AG04449 (cell line): ENCODE measurements at regions of chr19 and their contacts with region 1.

Region 1: GRCh38 chr19:14571695-14572490 is at the start of gene NDUFB7:
- DNase-seq: peak; percentile 72
- H3K4me3 ChIP-seq: peak within 1 kb of the TSS; percentile 99
- CTCF ChIP-seq: peak; percentile 93

Region 2: DNA sequence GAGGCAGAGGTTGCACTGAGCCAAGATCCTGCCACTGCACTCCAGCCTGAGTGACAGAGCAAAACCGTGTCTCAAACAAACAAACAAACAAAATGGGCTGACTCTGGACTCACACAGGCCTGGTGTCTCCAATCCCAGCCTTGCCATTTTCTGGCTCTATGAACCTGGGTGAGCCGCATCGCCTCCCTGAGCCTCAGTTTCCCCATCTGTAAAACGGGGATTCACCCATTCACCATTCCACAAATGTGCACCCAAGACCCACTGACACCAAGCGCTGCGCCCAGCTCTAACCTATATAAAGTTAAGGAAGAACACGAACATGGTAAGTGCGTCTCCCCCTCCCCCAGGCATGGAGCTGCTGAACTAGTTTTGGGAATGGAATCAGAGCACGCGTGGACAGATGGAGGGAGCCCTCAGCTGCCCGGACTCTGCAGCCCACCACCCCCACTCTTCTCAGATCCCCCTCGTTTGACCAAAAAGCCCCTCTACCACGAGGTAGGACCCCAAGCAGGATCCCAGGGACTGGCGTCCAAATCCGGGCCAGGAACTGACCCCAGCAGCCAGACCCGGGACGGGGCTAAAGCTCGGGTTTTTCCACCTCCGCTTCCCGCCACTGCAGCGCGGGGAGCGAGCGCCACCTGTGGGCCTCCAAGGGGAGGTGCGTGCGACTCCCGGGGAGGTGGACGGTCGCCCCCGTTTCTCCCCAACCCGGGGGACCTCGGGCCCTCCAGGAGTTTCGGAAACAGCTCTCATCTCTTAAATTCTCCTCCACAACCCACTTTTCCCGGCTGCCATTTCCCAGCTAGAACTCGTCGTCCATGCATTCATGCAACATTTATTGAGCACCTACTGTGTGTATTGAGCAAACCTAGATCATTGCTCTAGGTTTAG is 223.6 kb before region 1 on chr19:
- CTCF ChIA-PET with region 1: no interaction called
- POLR2A ChIA-PET with region 1: no interaction called
- DNase-seq: no peak
- H3K4me3 ChIP-seq: peak overlapping the region; percentile 50
- CTCF ChIP-seq: peak; percentile 98

Region 3: DNA sequence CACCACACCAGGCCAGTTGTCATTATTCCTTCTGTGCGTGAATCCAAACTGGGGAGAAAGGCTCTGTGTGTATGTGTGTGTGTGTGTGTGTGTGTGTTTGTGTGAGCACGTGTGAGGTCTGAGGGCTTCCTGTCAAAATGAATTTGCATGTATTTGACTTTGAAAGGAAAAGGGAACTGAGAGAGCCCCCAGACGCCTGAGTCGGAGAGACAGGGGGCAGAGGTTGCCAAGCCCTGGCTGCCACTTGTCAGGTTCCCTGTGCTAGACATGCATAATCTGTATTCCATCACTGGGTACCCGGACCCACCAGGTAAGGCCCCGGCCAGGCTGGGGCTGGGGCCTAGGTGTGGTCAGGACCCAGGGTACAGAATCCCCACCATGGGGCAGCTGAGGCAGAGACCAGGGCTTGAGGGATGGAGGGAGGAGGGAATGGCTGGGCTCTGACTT is 11.0 kb after region 1 on chr19 and contains the start of gene CLEC17A:
- CTCF ChIA-PET with region 1: interaction called, 15 read pairs
- POLR2A ChIA-PET with region 1: no interaction called
- DNase-seq: no peak
- H3K4me3 ChIP-seq: no peak within 1 kb of the TSS
- CTCF ChIP-seq: no peak

Region 4: GRCh38 chr19:14595516-14595915 is 23.6 kb after region 1 on chr19:
- CTCF ChIA-PET with region 1: no interaction called
- POLR2A ChIA-PET with region 1: no interaction called
- DNase-seq: no peak
- H3K4me3 ChIP-seq: no peak overlapping the region
- CTCF ChIP-seq: no peak

Region 5: GRCh38 chr19:14616407-14616806 is 44.5 kb after region 1 on chr19:
- CTCF ChIA-PET with region 1: no interaction called
- POLR2A ChIA-PET with region 1: no interaction called
- DNase-seq: no peak
- H3K4me3 ChIP-seq: no peak overlapping the region
- CTCF ChIP-seq: no peak

Region 6: DNA sequence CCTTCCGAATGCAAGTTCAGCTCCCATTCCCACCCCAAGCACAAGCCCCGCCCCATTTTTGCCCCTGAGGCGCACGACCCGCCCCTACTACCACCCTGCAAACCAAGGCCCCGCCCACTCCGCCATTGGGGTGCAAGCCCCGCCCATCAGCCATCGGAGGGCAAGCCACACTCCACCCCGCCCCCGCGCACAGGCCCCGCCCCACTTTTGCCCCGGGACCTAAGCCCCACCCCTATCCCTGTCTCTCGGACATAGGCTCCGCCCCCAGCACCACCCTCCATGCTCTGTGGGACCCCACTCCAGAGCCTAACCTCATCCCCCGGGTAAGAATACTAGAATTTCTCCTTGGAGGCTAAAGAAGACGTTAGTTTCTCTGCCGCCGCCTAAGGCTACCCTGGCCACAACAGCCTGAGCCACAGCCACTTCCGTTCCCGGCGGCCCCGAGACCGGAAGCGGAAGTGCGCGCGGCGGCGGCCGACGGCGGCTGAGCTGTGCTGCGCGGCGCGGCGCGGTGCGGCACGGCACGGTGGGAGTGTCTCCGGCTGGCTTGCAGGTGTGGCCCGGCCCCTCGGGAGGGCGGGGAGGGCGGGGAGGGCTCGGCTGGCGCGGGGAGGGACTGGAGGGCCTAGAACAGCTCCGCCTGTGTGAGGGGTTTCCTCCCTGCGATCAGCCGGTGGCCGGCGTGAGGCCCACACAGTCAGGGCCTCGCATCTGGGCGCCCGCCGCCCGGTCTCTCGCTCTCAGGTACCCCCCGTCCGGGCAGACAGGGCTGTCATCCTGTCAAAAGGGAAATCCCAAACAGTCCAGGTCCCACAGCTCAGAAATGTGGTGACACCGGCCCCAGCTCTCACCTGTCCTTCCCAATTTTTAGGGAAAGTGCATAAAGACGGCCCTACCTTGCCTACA is 118.0 kb after region 1 on chr19 and contains the start of gene ZNF333:
- CTCF ChIA-PET with region 1: interaction called, 247 read pairs
- POLR2A ChIA-PET with region 1: interaction called, 6 read pairs
- DNase-seq: peak; percentile 40
- H3K4me3 ChIP-seq: peak within 1 kb of the TSS; percentile 84
- CTCF ChIP-seq: no peak

Region 7: DNA sequence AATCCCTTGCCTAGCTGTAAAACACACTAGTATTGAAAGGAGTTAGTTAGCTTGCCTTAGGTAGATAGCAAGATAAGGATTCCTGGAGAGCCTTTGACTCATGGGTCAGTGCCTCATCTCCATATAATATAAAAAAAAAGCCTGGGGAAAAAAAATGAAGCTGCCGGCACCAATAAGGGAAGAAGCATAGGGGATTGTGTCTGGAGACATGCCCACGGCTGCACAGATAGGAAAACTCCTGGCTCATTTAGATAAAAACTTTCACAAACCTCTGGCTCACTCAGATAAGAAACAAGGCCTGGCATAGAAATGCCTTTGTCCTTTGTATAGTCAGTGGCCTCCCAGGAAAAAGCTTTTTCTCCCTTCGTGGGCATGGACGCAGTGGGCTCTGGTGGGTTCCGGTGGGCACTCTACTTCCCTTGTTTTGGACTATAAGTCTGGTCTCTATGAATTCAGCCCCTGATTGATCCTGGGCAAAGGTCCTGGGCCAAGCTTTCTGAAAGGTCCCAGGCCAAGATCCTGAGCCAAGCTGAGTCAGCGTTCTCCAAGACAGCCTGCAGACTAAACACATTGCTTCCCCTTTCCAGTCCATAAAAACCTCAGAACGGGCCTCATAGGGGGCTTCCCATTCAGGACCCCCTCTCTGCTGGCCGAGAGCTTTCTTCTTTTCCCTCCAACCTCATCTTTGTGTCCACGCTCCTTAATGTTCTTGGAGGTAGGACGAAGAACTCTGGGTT is 318.9 kb after region 1 on chr19:
- CTCF ChIA-PET with region 1: interaction called, 52 read pairs
- POLR2A ChIA-PET with region 1: no interaction called
- DNase-seq: no peak
- H3K4me3 ChIP-seq: no peak overlapping the region
- CTCF ChIP-seq: no peak